Mammary epithelial cell (primary cell): ENCODE measurements at regions of chr7 and their contacts with region 1.

Region 1: GRCh38 chr7:137454246-137454724 is 110.8 kb upstream of the PTN start:
- DNase-seq: peak; percentile 36
- H3K4me3 ChIP-seq: no peak overlapping the region
- H3K27ac ChIP-seq: no peak overlapping the region
- H3K4me1 ChIP-seq: peaks cover 10% of the 10 kb centered on the region
- H3K27me3 ChIP-seq: no peaks in the 10 kb centered on the region
- CTCF ChIP-seq: peak; percentile 60 to 62

Region 2: DNA sequence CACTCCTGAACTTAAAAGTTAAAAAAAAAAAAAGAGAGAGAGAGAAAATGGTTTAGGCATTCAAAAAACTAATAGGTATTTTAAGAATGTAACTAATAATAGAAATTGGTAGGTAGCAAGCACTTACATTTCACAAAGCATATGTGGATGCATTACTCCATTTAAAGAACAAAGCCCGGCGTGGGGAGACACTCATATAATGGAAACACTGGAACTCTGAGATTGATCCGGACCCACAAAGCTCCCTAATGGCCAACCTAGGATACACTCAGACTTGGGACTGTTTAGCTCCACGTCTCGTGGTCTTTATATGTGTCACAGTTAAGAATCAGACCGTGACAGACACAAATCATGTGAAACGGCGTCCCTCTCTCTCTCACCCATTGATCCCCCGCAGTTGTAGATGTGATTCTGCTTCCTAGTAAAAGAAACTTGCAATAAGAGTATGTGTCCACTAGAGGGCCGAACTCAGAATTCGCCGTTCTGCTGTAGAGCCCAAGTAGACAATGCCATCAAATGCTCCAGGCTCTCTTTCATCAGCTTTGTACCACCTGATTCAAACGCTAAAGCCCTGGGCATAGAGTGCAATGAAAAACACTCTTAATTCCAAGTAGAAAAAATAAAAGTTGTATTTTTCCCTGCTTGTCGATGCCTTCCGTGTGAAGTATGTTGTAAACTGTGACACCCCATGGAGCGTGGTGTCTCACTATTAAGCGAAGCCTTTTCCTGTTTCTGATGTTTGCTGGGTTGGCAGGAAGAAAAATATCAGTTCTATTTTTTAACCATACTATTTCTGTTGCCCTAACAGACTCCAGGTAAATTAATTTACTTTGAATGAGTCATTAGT is 1048.1 kb before region 1 on chr7:
- CTCF ChIA-PET with region 1: no interaction called
- dilution Hi-C with region 1: no loop called
- in situ Hi-C with region 1: no loop called
- intact Hi-C with region 1: loop called (anchors 5 kb)
- DNase-seq: peak; percentile 35
- H3K4me3 ChIP-seq: no peak overlapping the region
- H3K27ac ChIP-seq: no peak overlapping the region
- H3K4me1 ChIP-seq: no peaks in the 10 kb centered on the region
- H3K27me3 ChIP-seq: no peaks in the 10 kb centered on the region
- CTCF ChIP-seq: peak; percentile 61 to 79

Region 3: DNA sequence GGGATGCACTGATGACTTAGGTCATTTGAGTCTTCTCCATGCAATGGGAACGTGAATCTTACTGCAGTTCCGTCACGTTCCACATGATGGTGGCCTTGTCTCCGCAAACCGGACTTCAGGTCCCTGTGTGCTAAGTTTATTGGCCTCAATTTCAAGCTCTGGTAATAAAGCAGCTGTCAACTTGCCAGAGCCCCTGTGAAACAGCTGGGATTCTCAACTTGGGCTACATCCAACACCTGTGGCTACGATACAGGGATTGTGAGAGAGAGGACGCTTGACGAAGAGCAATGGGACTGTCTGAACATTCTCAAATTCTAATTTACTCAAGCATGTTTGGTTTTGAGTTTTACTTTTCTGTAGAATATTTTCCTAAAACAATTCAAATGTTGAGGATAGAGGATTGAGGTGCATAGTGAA is 285.0 kb before region 1 on chr7:
- CTCF ChIA-PET with region 1: no interaction called
- dilution Hi-C with region 1: no loop called
- in situ Hi-C with region 1: loop called in 1 of 2 experiments (anchors 10 kb)
- intact Hi-C with region 1: loop called (anchors 1 kb)
- DNase-seq: peak; percentile 29
- H3K4me3 ChIP-seq: no peak overlapping the region
- H3K27ac ChIP-seq: no peak overlapping the region
- H3K4me1 ChIP-seq: no peaks in the 10 kb centered on the region
- H3K27me3 ChIP-seq: no peaks in the 10 kb centered on the region
- CTCF ChIP-seq: peak; percentile 84 to 88

Region 4: DNA sequence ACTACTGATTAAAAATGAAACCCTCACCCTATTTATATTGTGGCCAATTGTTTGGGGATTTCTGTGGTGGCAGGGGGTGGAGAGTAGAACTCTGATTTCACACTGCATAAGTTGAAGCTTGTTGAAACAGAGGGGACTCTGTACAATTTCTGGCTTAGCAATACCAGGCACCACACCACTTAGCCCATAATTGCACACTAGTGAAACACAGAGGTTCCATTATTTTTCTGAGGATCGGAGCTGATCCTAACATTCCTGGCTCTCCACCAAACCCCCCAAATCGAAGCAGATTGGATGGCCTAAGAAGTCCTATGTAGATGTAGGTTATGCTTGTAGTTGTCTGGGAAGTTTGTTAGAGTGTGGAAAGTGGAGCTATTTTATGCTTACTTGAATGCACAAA is 157.7 kb before region 1 on chr7:
- CTCF ChIA-PET with region 1: no interaction called
- dilution Hi-C with region 1: no loop called
- in situ Hi-C with region 1: no loop called
- intact Hi-C with region 1: loop called (anchors 10 kb)
- DNase-seq: no peak
- H3K4me3 ChIP-seq: no peak overlapping the region
- H3K27ac ChIP-seq: no peak overlapping the region
- H3K4me1 ChIP-seq: no peaks in the 10 kb centered on the region
- H3K27me3 ChIP-seq: peaks cover 3% of the 10 kb centered on the region
- CTCF ChIP-seq: no peak

Region 5: DNA sequence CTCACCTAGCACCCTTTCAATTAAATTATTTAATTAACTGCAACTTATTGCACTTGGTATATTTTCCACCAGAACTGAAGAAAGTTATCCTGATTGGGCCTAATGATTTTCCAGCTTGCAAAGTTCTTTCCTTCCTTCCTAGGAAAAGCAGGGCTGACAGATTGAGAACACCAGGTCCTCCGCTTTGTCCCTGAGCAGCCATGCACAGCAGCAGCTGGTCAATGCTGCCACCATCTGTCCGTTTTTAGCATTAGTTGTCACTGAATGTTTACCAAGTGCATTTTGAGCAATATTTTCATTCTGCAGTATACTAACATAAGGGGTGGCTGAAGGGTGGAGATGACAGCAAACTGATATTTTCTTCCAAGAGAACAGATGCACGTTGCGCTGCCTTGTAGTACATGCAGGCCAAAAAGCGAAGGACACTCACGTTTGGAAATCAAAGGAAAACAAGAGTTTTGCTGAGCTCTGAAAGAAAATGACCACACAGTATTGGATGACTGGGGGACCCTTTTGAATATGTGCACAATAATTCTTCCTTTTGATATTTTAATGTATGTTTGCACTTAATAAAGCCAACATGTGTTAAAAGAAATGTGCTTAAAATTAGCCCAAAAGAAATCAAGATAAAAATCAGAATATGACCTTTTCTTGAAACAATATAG is 138.1 kb after region 1 on chr7:
- CTCF ChIA-PET with region 1: no interaction called
- dilution Hi-C with region 1: no loop called
- in situ Hi-C with region 1: no loop called
- intact Hi-C with region 1: loop called (anchors 2 kb)
- DNase-seq: peak; percentile 54
- H3K4me3 ChIP-seq: no peak overlapping the region
- H3K27ac ChIP-seq: no peak overlapping the region
- H3K4me1 ChIP-seq: peaks cover 12% of the 10 kb centered on the region
- H3K27me3 ChIP-seq: peaks cover under 1% of the 10 kb centered on the region
- CTCF ChIP-seq: peak; percentile 92 to 96